HCT116 (cell line): ENCODE measurements at regions of chr6 and their contacts with region 1.

Region 1: GRCh38 chr6:158869826-158870648 is 50.9 kb upstream of the EZR start:
- DNase-seq: peak; percentile 99
- ATAC-seq: peak; percentile 82
- H3K4me3 ChIP-seq: peak overlapping the region; percentile 37 to 44
- H3K27ac ChIP-seq: peak overlapping the region; percentile 94
- H3K4me1 ChIP-seq: peaks cover 52 to 63% of the 10 kb centered on the region in 2 experiments
- H3K27me3 ChIP-seq: no peaks in the 10 kb centered on the region
- CTCF ChIP-seq: peak in 2 of 3 experiments; percentile 34 to 35; a peak in 4 of 6 replicates
- POLR2A ChIP-seq: peak; percentile 92
- RAD21 ChIP-seq: no peak

Region 2: GRCh38 chr6:158704181-158704822 is 165.7 kb before region 1 on chr6:
- CTCF ChIA-PET with region 1: no interaction called
- POLR2A ChIA-PET with region 1: interaction called, 15 read pairs
- RAD21 ChIA-PET with region 1: no interaction called
- intact Hi-C with region 1: no loop called
- DNase-seq: peak; percentile 82
- ATAC-seq: peak; percentile 84
- H3K4me3 ChIP-seq: peak overlapping the region; percentile 32 to 49
- H3K27ac ChIP-seq: peak overlapping the region; percentile 92
- H3K4me1 ChIP-seq: peaks cover 52 to 77% of the 10 kb centered on the region in 2 experiments
- H3K27me3 ChIP-seq: no peaks in the 10 kb centered on the region
- CTCF ChIP-seq: peak in 2 of 3 experiments; percentile 100; a peak in 4 of 6 replicates
- POLR2A ChIP-seq: no peak
- RAD21 ChIP-seq: no peak

Region 3: DNA sequence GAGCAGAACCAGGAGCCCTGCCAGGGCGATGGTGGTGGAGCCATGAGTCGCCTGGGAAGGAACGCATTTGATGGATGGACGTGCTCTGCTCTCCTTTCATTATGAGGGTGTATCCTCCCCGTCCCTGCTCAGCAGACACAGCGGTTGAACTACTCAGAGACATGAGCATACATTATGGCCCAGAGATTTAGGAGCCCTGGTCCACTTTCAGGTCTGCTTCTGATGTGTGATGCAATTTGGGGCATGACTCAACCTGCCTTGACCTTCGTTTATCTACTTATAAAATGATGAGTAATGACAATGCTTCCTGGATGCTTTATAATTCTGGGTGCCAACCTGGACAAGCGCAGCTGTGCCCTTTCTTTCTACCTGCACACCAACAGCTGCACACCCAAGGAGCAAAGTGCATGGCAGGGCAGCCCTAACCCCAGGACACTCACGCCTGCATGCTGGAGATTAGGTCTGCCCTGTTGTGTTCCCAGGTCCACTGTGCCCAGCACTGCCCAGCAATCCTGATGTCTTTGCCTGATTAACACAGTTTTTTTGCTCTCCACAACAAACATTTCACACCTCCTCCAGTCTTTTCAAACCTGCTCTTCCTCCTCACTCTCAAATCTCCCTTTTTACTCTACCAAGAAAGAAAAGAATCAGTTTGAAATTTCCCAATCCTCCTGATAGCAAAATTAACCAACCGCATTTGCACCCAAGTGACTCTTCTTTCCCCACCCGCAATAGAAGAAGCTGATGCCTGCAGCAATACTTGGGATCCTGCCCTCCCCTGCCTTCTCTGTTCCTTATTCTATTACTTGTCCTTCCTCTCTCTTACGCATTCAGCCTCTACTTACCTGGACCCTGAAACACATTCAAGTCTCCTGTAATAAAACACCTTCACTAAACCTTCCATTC is 132.1 kb before region 1 on chr6:
- CTCF ChIA-PET with region 1: no interaction called
- POLR2A ChIA-PET with region 1: interaction called, 18 read pairs
- RAD21 ChIA-PET with region 1: no interaction called
- intact Hi-C with region 1: no loop called
- DNase-seq: peak; percentile 92
- ATAC-seq: peak; percentile 77
- H3K4me3 ChIP-seq: no peak overlapping the region
- H3K27ac ChIP-seq: peak overlapping the region; percentile 97
- H3K4me1 ChIP-seq: peaks cover 58 to 88% of the 10 kb centered on the region in 2 experiments
- H3K27me3 ChIP-seq: no peaks in the 10 kb centered on the region
- CTCF ChIP-seq: no peak
- POLR2A ChIP-seq: no peak
- RAD21 ChIP-seq: no peak

Region 4: GRCh38 chr6:158819213-158819909 is 50.7 kb before region 1 on chr6 and contains the start of gene EZR:
- CTCF ChIA-PET with region 1: no interaction called
- POLR2A ChIA-PET with region 1: interaction called, 83 read pairs
- RAD21 ChIA-PET with region 1: interaction called, 3 to 5 read pairs
- intact Hi-C with region 1: loop called (anchors 1 kb)
- DNase-seq: peak; percentile 73
- ATAC-seq: peak; percentile 73
- H3K4me3 ChIP-seq: peak within 1 kb of the TSS; percentile 77 to 81
- H3K27ac ChIP-seq: peak within 1 kb of the TSS; percentile 92
- H3K4me1 ChIP-seq: peaks cover 28 to 39% of the 10 kb centered on the region in 2 experiments
- H3K27me3 ChIP-seq: no peaks in the 10 kb centered on the region
- CTCF ChIP-seq: 0 out of 6 replicates have a peak, but pooled peaks of 1 of the 3 experiments have one; percentile 2
- POLR2A ChIP-seq: peak; percentile 80
- RAD21 ChIP-seq: no peak
- total RNA-seq, gene EZR: 1,402 TPM

Region 5: DNA sequence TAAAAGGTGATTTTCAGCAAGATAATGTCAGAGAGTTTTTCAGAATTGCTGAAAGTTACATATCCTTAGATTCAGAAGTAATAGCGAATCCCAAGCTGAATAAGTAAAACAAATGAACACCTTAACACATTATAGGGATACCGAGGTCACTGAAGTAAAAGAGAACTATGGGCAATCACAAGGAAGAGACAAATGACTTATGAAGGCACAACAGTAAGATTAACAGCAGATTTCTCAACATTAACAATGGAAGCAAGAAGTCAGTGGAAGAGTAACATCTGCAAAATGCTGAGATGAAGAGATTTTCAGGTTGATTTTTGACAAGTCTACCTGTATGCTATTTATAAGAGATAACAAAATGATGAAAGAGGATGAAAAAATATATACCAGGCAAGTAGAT is 35.2 kb after region 1 on chr6:
- CTCF ChIA-PET with region 1: no interaction called
- POLR2A ChIA-PET with region 1: interaction called, 10 read pairs
- RAD21 ChIA-PET with region 1: no interaction called
- intact Hi-C with region 1: loop called (anchors 2 kb)
- DNase-seq: peak; percentile 47
- ATAC-seq: no peak
- H3K4me3 ChIP-seq: no peak overlapping the region
- H3K27ac ChIP-seq: no peak overlapping the region
- H3K4me1 ChIP-seq: peaks cover 6% of the 10 kb centered on the region in 2 experiments; a peak in 3 of 4 replicates
- H3K27me3 ChIP-seq: no peaks in the 10 kb centered on the region
- CTCF ChIP-seq: no peak
- POLR2A ChIP-seq: no peak
- RAD21 ChIP-seq: peak; percentile 26; the same call in 1 of the 2 replicates

Region 6: GRCh38 chr6:158972241-158973233 is 102.5 kb after region 1 on chr6:
- CTCF ChIA-PET with region 1: no interaction called
- POLR2A ChIA-PET with region 1: interaction called, 8 read pairs
- RAD21 ChIA-PET with region 1: no interaction called
- intact Hi-C with region 1: loop called (anchors 5 kb)
- DNase-seq: peak; percentile 55
- ATAC-seq: peak; percentile 72
- H3K4me3 ChIP-seq: no peak overlapping the region
- H3K27ac ChIP-seq: peak overlapping the region; percentile 6; the same call in 1 of the 2 replicates
- H3K4me1 ChIP-seq: peaks cover 0 to 20% of the 10 kb centered on the region in 2 experiments; a peak in 2 of 4 replicates
- H3K27me3 ChIP-seq: no peaks in the 10 kb centered on the region
- CTCF ChIP-seq: peak; percentile 31 to 70 (median 59); a peak in 5 of 6 replicates
- POLR2A ChIP-seq: no peak
- RAD21 ChIP-seq: peak; percentile 93